ENCODE measurements at regions of chr6 and their contacts with region 1.

Region 1: GRCh38 chr6:3144571-3144970 is 12.8 kb downstream of the TUBB2A start:
- DNase-seq: no peak
- ATAC-seq: no peak
- H3K4me3 ChIP-seq: no peak overlapping the region
- H3K27ac ChIP-seq: no peak overlapping the region
- H3K4me1 ChIP-seq: no peaks in the 10 kb centered on the region
- H3K27me3 ChIP-seq: no peaks in the 10 kb centered on the region

Region 2: DNA sequence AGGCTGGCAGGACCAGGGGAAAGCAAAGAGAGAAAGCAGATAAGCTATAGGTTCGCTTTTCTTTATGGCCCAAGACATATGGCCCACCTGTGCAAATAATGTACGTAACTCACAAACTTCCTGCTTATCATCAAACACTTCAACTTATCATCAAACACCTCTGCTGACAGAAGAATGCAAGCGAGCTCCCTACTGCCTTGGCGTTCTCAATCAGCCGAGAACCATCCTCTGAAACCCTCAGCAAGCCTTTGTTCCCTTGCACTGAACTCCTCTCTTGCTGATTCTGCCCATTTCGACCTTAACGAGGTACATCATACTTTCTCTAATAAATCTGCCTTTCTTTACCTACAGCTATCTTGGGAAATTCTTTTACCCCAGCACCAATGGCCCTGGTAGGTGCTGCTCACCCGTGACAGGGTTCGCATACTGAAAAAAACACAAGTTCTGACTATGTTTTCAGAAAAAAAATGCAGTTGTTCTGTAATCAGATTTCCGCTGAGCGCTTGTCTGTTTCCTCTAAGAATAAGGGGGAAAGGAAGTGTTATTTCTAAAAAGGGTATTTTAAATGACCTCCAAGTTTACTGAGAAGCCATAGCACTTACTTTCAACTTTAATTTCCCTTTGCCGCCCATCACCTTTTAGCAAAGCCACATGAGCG is 201.5 kb before region 1 on chr6:
- intact Hi-C with region 1: no loop called
- DNase-seq: no peak
- ATAC-seq: no peak
- H3K4me3 ChIP-seq: no peak overlapping the region
- H3K27ac ChIP-seq: peak overlapping the region; percentile 42
- H3K4me1 ChIP-seq: peaks cover 4% of the 10 kb centered on the region
- H3K27me3 ChIP-seq: no peaks in the 10 kb centered on the region

Region 3: DNA sequence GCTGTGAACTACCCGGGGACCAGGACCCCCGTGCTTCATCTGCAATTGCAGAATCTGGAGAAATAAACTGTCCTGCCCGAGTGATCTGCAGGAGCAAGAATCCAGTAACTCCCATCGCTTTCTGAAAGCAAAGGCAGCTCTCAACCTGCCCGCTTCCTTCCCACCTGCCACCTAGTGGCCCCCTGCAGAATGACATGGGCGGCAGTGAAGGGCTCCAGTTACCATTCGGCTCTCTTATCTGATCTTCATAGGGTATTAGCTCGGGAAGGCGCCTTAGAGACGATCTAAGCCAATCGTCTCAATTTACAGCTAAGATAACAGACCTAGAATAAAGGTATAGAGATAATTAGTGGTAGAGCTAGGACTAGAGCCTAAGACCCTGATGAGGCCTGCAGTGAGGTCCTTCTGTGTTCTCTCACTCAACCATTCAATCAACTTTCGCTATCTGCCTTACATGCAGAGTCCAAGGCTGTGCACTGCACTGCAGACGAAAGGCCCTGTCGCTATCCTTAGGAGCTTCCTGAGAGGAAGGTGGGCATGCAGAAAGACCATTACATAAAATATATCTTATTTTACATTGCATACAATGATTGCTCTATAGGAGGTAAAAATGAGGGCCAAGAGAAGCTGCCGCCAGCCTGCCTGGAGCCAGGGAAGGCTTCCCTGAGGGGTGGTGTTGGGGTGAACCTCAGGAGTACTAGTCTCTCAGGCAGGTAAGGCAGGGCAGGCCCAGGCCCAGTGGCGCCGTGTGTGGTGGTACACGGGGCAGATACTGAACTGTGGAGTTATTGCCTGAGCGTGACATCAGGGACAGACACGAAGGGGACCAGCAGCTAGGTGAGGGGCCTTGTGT is 107.1 kb after region 1 on chr6:
- intact Hi-C with region 1: loop called in 1 of 4 experiments (anchors 5 kb)
- DNase-seq: peak; percentile 74 to 91 (median 90)
- ATAC-seq: peak; percentile 81 to 82
- H3K4me3 ChIP-seq: no peak overlapping the region
- H3K27ac ChIP-seq: no peak overlapping the region
- H3K4me1 ChIP-seq: peaks cover 3% of the 10 kb centered on the region
- H3K27me3 ChIP-seq: no peaks in the 10 kb centered on the region